Naive thymus-derived CD4-positive, alpha-beta T cell (primary cell): ENCODE measurements at regions of chr10 and their contacts with region 1.

Region 1: DNA sequence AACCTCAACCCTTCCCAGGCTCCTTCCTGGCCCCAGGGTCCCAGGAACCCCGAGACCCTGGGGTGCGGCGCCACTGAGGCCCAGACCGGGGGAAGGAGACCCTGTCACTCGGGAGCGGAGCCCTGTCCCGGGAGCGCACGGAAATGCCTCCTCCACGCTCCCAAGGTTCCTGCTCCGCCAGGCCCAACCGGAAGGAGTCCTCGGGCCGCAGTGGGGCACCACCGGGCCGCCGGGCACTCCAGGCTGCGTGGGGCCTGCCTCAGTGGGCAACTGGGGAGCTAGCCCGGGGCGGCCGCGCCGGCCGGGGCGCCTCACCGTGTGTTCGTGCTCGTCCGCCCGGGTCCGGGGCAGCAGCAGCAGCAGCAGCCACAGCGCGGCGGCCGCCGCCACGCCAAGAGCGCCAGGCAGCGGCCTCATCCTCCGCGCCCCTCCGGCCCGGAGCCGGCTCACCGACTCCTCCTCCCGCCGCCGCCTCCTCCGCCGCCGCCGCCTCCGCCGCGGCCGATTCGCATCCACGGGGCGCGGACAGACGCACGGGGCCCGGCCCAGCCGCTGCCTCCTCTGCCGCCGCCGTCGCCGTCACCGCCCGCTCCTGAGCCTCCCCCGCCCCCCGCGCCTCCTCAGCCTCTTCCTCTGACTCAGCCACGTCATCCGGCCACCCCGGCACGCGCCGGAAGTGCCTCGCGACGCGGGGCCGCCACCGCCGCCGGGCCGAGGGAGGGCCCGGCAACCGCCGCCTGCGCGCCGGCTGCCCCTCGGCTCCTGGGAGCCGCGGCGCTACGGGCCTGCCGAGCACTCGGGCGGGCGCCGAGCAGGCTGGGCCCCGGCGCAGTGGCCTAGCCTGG is at the start of gene TM9SF3:
- DNase-seq: peak; percentile 86 to 91 (median 89)
- ATAC-seq: peak; percentile 93
- H3K4me3 ChIP-seq: peak within 1 kb of the TSS; percentile 83
- H3K4me3 Mint-ChIP-seq: peak within 1 kb of the TSS in 8 of 10 donors; percentile 82 to 97 (median 92)
- H3K27ac ChIP-seq: peak within 1 kb of the TSS; percentile 100
- H3K27ac Mint-ChIP-seq: peak within 1 kb of the TSS in 8 of 9 donors; percentile 89 to 99 (median 95)
- H3K4me1 ChIP-seq: peaks cover 28 to 32% of the 10 kb centered on the region in 2 donors
- H3K4me1 Mint-ChIP-seq: peaks cover 26 to 47% (median 40%) of the 10 kb centered on the region in 7 donors
- H3K27me3 ChIP-seq: no peaks in the 10 kb centered on the region
- H3K27me3 Mint-ChIP-seq: peaks cover 0 to 13% (median 0%) of the 10 kb centered on the region in 5 donors
- total RNA-seq, gene TM9SF3: 76.7 to 94.0 (median 83.5) TPM

Region 2: GRCh38 chr10:95907456-95908253 is 679.0 kb before region 1 on chr10 and contains the start of gene CC2D2B:
- CTCF ChIA-PET with region 1: no interaction called
- POLR2A ChIA-PET with region 1: no interaction called
- intact Hi-C with region 1: loop called in 1 of 2 experiments (anchors 5 kb)
- DNase-seq: peak; percentile 26 to 78 (median 53)
- ATAC-seq: peak; percentile 84
- H3K4me3 ChIP-seq: peak within 1 kb of the TSS; percentile 62
- H3K4me3 Mint-ChIP-seq: peak within 1 kb of the TSS; percentile 92 to 95 (median 94)
- H3K27ac ChIP-seq: peak within 1 kb of the TSS; percentile 65
- H3K27ac Mint-ChIP-seq: peak within 1 kb of the TSS; percentile 29 to 92 (median 89)
- H3K4me1 ChIP-seq: no peaks in the 10 kb centered on the region
- H3K4me1 Mint-ChIP-seq: peaks cover 11 to 20% (median 18%) of the 10 kb centered on the region in 7 donors
- H3K27me3 ChIP-seq: no peaks in the 10 kb centered on the region
- H3K27me3 Mint-ChIP-seq: peaks cover 0 to 20% (median 0%) of the 10 kb centered on the region in 5 donors
- total RNA-seq, gene CC2D2B: 0.64 to 0.99 TPM in 2 of 5 experiments, not detected in the others

Region 3: DNA sequence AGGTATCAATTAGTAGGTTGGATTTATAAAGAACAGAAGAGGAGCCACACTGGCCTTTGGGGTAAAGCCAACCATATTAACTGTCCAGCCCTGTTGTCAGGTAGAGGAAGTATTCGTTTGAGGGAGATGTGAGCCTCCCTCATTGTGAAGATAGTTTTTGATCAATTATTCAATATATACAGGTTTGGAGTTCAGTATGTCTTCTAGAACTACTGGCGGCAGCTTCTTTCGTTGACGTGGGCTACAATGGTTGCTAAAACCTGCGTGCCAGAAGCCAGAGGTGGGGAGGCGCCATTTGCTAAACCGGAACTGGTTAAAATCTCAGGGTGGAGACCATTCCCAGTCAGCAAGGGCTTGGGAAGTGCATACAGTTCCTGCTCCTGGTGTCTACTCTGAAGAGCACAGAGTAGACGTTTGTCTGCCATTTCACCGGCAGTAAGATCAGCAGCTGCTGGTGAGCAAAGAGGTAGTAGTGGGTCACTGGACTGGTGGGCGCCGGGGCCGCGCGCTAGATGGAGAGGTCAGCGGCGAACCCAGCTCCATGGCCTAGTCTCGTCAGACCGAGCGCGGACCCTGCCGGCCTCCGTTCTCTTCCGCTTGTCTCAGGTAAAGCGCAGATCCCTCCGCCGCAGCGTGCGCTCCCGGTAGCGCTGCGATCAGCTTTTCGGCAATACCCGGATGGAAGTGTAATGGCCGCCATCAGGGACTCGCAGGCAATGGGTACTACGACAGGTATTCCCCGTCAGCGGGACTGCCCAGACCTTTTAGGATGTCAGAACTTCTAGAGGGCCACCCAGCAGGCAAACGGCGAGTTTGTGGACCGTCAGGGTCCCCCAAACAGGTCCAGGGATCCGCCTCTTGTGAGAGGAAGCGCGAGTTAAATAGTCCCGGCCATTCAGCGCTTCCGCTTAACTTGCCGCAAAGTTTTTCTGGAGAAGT is 457.0 kb before region 1 on chr10 and contains the start of gene ZNF518A:
- CTCF ChIA-PET with region 1: no interaction called
- POLR2A ChIA-PET with region 1: no interaction called
- intact Hi-C with region 1: loop called (anchors 1 to 2 kb)
- DNase-seq: peak; percentile 86 to 96 (median 94)
- ATAC-seq: peak; percentile 90
- H3K4me3 ChIP-seq: peak within 1 kb of the TSS; percentile 88
- H3K4me3 Mint-ChIP-seq: peak within 1 kb of the TSS; percentile 79 to 98 (median 94)
- H3K27ac ChIP-seq: peak within 1 kb of the TSS; percentile 97
- H3K27ac Mint-ChIP-seq: peak within 1 kb of the TSS; percentile 97 to 100 (median 99)
- H3K4me1 ChIP-seq: peaks cover 6 to 20% of the 10 kb centered on the region in 2 donors
- H3K4me1 Mint-ChIP-seq: peaks cover 7 to 35% (median 32%) of the 10 kb centered on the region in 7 donors
- H3K27me3 ChIP-seq: peaks cover 0 to 8% of the 10 kb centered on the region in 2 donors
- H3K27me3 Mint-ChIP-seq: peaks cover 30 to 46% (median 39%) of the 10 kb centered on the region in 5 donors
- total RNA-seq, gene ZNF518A: 17.6 to 25.1 (median 21.5) TPM

Region 4: DNA sequence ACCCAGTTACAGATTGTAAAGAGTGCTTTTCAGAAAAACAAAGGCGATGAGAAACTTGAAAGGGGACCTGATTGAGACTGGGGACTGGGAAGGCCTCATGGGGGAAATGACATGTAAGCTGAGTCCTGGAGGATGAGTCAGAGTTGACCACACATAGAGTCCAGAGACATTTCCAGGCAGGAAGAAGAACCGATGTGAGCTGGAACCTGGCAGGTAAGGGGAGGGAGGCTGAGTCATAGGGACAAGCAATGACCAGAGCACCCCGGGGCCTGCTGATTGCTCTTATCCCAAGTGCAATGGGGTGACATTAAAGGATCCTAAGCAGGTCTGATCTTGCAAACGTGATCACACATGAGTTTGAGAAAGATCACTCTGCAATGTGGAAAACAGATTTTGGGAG is 84.7 kb before region 1 on chr10:
- CTCF ChIA-PET with region 1: no interaction called
- POLR2A ChIA-PET with region 1: no interaction called
- intact Hi-C with region 1: no loop called
- DNase-seq: no peak
- ATAC-seq: no peak
- H3K4me3 ChIP-seq: no peak overlapping the region
- H3K4me3 Mint-ChIP-seq: no peak overlapping the region
- H3K27ac ChIP-seq: no peak overlapping the region
- H3K27ac Mint-ChIP-seq: no peak overlapping the region
- H3K4me1 ChIP-seq: no peaks in the 10 kb centered on the region
- H3K4me1 Mint-ChIP-seq: peaks cover 0 to 1% (median 0%) of the 10 kb centered on the region in 7 donors
- H3K27me3 ChIP-seq: peaks cover 0 to 3% of the 10 kb centered on the region in 2 donors
- H3K27me3 Mint-ChIP-seq: peaks cover 4 to 27% (median 10%) of the 10 kb centered on the region in 5 donors

Region 5: GRCh38 chr10:96565774-96566173 is 20.9 kb before region 1 on chr10:
- CTCF ChIA-PET with region 1: interaction called, 3 read pairs
- POLR2A ChIA-PET with region 1: no interaction called
- intact Hi-C with region 1: loop called (anchors 2 kb)
- DNase-seq: no peak
- ATAC-seq: no peak
- H3K4me3 ChIP-seq: no peak overlapping the region
- H3K4me3 Mint-ChIP-seq: no peak overlapping the region
- H3K27ac ChIP-seq: no peak overlapping the region
- H3K27ac Mint-ChIP-seq: peak overlapping the region in 1 of 9 donors; percentile 69
- H3K4me1 ChIP-seq: peaks cover 4 to 6% of the 10 kb centered on the region in 2 donors
- H3K4me1 Mint-ChIP-seq: peaks cover 30 to 61% (median 46%) of the 10 kb centered on the region in 7 donors
- H3K27me3 ChIP-seq: no peaks in the 10 kb centered on the region
- H3K27me3 Mint-ChIP-seq: no peaks in the 10 kb centered on the region

Region 6: GRCh38 chr10:97109547-97109946 is 522.9 kb after region 1 on chr10:
- CTCF ChIA-PET with region 1: no interaction called
- POLR2A ChIA-PET with region 1: no interaction called
- intact Hi-C with region 1: no loop called
- DNase-seq: no peak
- ATAC-seq: no peak
- H3K4me3 ChIP-seq: no peak overlapping the region
- H3K4me3 Mint-ChIP-seq: no peak overlapping the region
- H3K27ac ChIP-seq: no peak overlapping the region
- H3K27ac Mint-ChIP-seq: no peak overlapping the region
- H3K4me1 ChIP-seq: peaks cover 0 to 4% of the 10 kb centered on the region in 2 donors
- H3K4me1 Mint-ChIP-seq: peaks cover 0 to 2% (median 0%) of the 10 kb centered on the region in 7 donors
- H3K27me3 ChIP-seq: no peaks in the 10 kb centered on the region
- H3K27me3 Mint-ChIP-seq: peaks cover 4 to 14% (median 12%) of the 10 kb centered on the region in 5 donors

Region 7: GRCh38 chr10:97334370-97335175 is 747.9 kb after region 1 on chr10 and contains the start of gene FRAT2:
- CTCF ChIA-PET with region 1: no interaction called
- POLR2A ChIA-PET with region 1: no interaction called
- intact Hi-C with region 1: loop called in 1 of 2 experiments (anchors 10 kb)
- DNase-seq: peak; percentile 85 to 96 (median 92)
- ATAC-seq: peak; percentile 94
- H3K4me3 ChIP-seq: peak within 1 kb of the TSS; percentile 78
- H3K4me3 Mint-ChIP-seq: peak within 1 kb of the TSS; percentile 88 to 98 (median 94)
- H3K27ac ChIP-seq: peak within 1 kb of the TSS; percentile 97
- H3K27ac Mint-ChIP-seq: peak within 1 kb of the TSS; percentile 89 to 97 (median 93)
- H3K4me1 ChIP-seq: peaks cover 20 to 24% of the 10 kb centered on the region in 2 donors
- H3K4me1 Mint-ChIP-seq: peaks cover 28 to 48% (median 42%) of the 10 kb centered on the region in 7 donors
- H3K27me3 ChIP-seq: no peaks in the 10 kb centered on the region
- H3K27me3 Mint-ChIP-seq: peaks cover 0 to 36% (median 0%) of the 10 kb centered on the region in 5 donors
- total RNA-seq, gene FRAT2: 9.3 to 39.7 (median 29.8) TPM

Region 8: DNA sequence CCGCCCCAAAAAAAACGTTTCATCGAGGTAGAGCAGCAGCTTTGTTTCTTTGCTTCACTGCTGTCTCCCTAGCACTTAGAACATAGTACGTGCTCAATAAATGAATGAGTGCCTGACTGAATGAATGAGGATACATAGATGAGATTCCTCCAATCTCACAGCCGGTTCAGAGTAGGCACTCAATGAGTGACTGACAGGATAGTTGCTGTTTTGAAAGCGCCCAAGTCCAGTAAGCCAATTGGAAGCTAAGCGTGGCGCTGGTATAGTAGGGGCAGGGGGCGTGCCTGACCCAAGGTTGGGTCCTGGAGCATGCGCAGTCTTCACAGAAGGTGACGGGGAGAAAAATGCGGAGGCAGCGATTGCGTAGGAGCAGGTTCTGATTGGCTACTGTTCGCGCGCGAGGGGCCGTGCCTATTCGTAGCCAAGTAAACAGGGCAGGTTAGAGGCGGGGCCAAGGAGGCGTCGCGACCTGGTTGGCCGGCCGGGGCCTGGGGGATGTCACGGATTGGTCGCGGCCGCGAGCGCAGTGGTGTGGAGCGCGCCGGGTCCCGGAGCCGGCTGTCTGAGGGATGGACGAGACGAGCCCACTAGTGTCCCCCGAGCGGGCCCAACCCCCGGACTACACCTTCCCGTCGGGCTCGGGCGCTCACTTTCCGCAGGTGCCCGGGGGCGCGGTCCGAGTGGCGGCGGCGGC is 1053.7 kb after region 1 on chr10 and contains the start of gene PI4K2A:
- CTCF ChIA-PET with region 1: no interaction called
- POLR2A ChIA-PET with region 1: no interaction called
- intact Hi-C with region 1: loop called (anchors 2 kb)
- DNase-seq: peak; percentile 89 to 99 (median 98)
- ATAC-seq: peak; percentile 98
- H3K4me3 ChIP-seq: peak within 1 kb of the TSS; percentile 82
- H3K4me3 Mint-ChIP-seq: peak within 1 kb of the TSS; percentile 64 to 99 (median 94)
- H3K27ac ChIP-seq: peak within 1 kb of the TSS; percentile 70
- H3K27ac Mint-ChIP-seq: peak within 1 kb of the TSS; percentile 69 to 94 (median 89)
- H3K4me1 ChIP-seq: peaks cover 4 to 15% of the 10 kb centered on the region in 2 donors
- H3K4me1 Mint-ChIP-seq: peaks cover 10 to 34% (median 26%) of the 10 kb centered on the region in 7 donors
- H3K27me3 ChIP-seq: no peaks in the 10 kb centered on the region
- H3K27me3 Mint-ChIP-seq: no peaks in the 10 kb centered on the region
- total RNA-seq, gene PI4K2A: 9.0 to 33.8 (median 11.0) TPM